GM18951 (cell line): ENCODE measurements at regions of chr2 and their contacts with region 1.

Region 1: GRCh38 chr2:86368161-86368824 is 30.9 kb upstream of the REEP1 start:
- POLR2A ChIP-seq: no peak

Region 2: GRCh38 chr2:86249579-86250391 is 118.5 kb before region 1 on chr2:
- in situ Hi-C with region 1: loop called (anchors 10 kb)
- POLR2A ChIP-seq: no peak

Region 3: DNA sequence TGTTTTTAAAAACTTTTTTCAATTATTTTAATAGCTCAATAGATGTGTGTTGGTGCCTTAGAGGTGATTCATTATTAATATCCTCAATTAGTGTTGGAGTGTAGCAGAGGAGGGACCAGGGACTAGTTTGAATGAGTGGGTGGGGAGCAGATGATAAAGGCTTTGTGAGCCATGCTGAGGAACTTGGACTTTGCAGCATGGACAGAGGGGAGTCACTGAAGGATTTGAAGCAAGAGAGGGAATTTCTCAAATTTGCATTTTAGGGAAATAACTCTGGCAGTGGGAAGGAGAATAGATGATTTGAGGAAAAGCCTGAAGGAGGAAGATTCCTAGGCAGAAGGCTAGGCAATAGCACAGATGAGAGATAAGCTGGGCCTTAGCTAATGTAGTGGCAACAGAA is 309.5 kb after region 1 on chr2:
- in situ Hi-C with region 1: no loop called
- POLR2A ChIP-seq: no peak

Region 4: DNA sequence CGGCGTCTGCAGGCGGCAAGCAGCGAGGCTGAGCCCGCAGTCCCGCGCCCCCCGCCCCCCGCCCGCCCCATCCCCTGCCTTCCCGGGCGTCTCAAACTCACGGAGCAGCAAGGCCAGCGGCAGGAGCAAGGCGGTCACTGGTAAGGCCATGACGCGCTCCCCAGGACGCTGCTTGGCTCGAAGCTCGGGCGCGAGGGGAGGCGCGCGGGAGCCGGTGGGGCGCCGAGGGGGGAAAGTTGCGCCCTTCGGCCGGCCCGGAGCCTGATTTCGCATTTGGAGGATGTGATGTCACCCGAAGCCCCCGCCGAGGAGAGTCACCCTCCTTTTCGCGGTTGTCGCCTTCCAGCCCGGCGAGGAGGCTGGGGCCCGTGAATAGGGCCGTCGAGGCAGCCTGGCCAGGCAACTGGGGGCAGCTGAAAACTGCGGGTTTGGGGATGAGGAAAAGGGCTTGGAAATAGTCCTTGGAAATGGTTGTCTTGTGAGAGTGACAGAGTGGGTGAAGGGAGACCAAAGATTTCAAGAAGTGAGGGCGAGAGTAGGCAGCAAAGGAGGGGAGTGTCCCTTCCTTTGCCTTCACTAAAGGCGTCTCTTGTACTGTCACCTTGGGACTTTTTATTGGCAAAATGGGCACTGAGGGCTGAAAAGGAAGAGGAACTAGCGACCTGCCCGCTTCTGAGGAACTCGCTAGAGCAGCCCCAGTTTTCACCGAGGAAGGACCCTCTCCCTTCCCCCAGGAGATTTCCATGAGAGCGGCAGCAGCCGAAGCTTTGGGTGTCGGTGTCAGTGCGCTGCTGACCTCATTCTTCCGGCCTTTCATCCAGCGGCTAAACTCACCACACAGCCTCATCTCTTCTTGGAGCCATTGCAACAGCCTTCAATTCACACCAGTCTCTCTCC is 422.6 kb after region 1 on chr2 and contains the start of gene CD8A:
- in situ Hi-C with region 1: no loop called
- POLR2A ChIP-seq: no peak